ENCODE measurements at regions of chr2 and their contacts with region 1.

Region 1: GRCh38 chr2:235766278-235766677 is 272.4 kb downstream of the AGAP1 start:
- DNase-seq: peak in 13 of 14 experiments; percentile 11 to 68 (median 24)
- ATAC-seq: peak; percentile 57
- H3K4me3 ChIP-seq: no peak overlapping the region
- H3K4me3 Mint-ChIP-seq: no peak overlapping the region
- H3K27ac ChIP-seq: no peak overlapping the region
- H3K27ac Mint-ChIP-seq: no peak overlapping the region
- H3K4me1 ChIP-seq: no peaks in the 10 kb centered on the region
- H3K4me1 Mint-ChIP-seq: peaks cover 4% of the 10 kb centered on the region
- H3K27me3 ChIP-seq: no peaks in the 10 kb centered on the region
- H3K27me3 Mint-ChIP-seq: peaks cover 22% of the 10 kb centered on the region
- CTCF ChIP-seq: peak; percentile 93

Region 2: GRCh38 chr2:236180831-236181453 is 414.7 kb after region 1 on chr2:
- CTCF ChIA-PET with region 1: no interaction called
- POLR2A ChIA-PET with region 1: no interaction called
- intact Hi-C with region 1: loop called (anchors 2 to 5 kb)
- DNase-seq: peak in 5 of 14 experiments; percentile 6 to 43 (median 20)
- ATAC-seq: no peak
- H3K4me3 ChIP-seq: no peak overlapping the region
- H3K4me3 Mint-ChIP-seq: no peak overlapping the region
- H3K27ac ChIP-seq: no peak overlapping the region
- H3K27ac Mint-ChIP-seq: no peak overlapping the region
- H3K4me1 ChIP-seq: peaks cover 17% of the 10 kb centered on the region
- H3K4me1 Mint-ChIP-seq: peaks cover 12% of the 10 kb centered on the region
- H3K27me3 ChIP-seq: peaks cover 52 to 82% of the 10 kb centered on the region in 2 experiments
- H3K27me3 Mint-ChIP-seq: peaks cover 89% of the 10 kb centered on the region
- CTCF ChIP-seq: peak; percentile 47

Region 3: DNA sequence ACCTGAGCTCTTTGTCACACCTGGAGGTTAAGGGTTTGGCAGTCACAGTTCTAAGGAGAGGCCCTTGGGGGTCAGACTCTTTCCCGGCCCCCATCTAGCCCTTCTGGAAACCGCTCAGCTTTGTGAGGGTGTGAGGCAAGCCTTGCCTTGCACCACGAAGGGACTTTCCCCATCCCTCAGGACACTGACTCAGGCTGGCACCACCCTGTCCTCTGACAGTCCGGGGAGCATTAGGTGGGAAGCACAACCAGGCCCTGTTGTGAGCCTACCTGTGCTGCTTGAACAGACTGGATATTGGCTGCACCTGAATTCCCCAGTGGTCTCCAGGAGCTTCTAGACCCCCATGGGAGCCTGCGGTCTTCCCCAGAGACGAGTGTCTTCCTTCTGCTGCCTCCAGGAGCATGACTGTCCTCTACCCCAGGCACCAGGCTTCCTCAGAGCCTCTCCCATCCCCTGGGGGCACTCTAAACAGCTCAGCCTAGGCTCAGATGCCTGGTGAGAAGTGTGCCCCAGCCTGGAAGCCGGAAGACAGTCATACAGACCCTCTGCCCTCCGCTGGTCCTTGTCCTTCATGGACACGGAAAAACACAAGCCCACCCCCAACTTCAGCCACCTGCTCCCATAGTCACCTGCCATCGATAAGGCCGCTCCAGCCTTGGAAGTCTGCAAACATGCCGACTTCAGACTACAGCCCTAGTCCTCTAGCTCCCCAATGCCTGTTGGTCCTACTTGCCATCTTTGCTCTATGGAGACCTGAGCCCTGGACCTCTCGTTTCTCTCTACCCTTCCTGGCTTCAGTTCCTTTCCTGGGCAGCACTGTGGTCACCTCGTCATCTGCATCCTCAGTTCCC is 449.1 kb after region 1 on chr2:
- CTCF ChIA-PET with region 1: no interaction called
- POLR2A ChIA-PET with region 1: no interaction called
- intact Hi-C with region 1: no loop called
- DNase-seq: no peak
- ATAC-seq: no peak
- H3K4me3 ChIP-seq: no peak overlapping the region
- H3K4me3 Mint-ChIP-seq: no peak overlapping the region
- H3K27ac ChIP-seq: no peak overlapping the region
- H3K27ac Mint-ChIP-seq: no peak overlapping the region
- H3K4me1 ChIP-seq: no peaks in the 10 kb centered on the region
- H3K4me1 Mint-ChIP-seq: no peaks in the 10 kb centered on the region
- H3K27me3 ChIP-seq: peaks cover 4 to 10% of the 10 kb centered on the region in 2 experiments
- H3K27me3 Mint-ChIP-seq: peaks cover 25% of the 10 kb centered on the region
- CTCF ChIP-seq: no peak

Region 4: GRCh38 chr2:237072067-237072931 is 1306.0 kb after region 1 on chr2:
- CTCF ChIA-PET with region 1: no interaction called
- POLR2A ChIA-PET with region 1: no interaction called
- intact Hi-C with region 1: loop called (anchors 1 to 5 kb)
- DNase-seq: peak; percentile 49 to 82 (median 68)
- ATAC-seq: peak; percentile 48
- H3K4me3 ChIP-seq: no peak overlapping the region
- H3K4me3 Mint-ChIP-seq: no peak overlapping the region
- H3K27ac ChIP-seq: no peak overlapping the region
- H3K27ac Mint-ChIP-seq: no peak overlapping the region
- H3K4me1 ChIP-seq: no peaks in the 10 kb centered on the region
- H3K4me1 Mint-ChIP-seq: no peaks in the 10 kb centered on the region
- H3K27me3 ChIP-seq: no peaks in the 10 kb centered on the region
- H3K27me3 Mint-ChIP-seq: no peaks in the 10 kb centered on the region
- CTCF ChIP-seq: peak; percentile 98

Measured in CD4-positive, alpha-beta T cell (primary cell).